Right lobe of liver (tissue), 6 donors: ENCODE measurements at regions of chr15 and their contacts with region 1.

Region 1: GRCh38 chr15:66774001-66774814 is 72.2 kb downstream of the SMAD6 start:
- DNase-seq: peak; percentile 84 to 85 (median 85)
- ATAC-seq: peak; percentile 90 to 92 (median 90)
- H3K4me3 ChIP-seq: no peak overlapping the region
- H3K27ac ChIP-seq: peak overlapping the region in 1 of 3 donors; percentile 42
- H3K4me1 ChIP-seq: peaks cover 0 to 41% (median 19%) of the 10 kb centered on the region in 4 donors
- H3K27me3 ChIP-seq: no peaks in the 10 kb centered on the region
- CTCF ChIP-seq: peak; percentile 95 to 99 (median 98)
- POLR2A ChIP-seq: no peak

Region 2: GRCh38 chr15:66497502-66498455 is 276.4 kb before region 1 on chr15 and contains the start of gene SNAPC5:
- intact Hi-C with region 1: no loop called
- DNase-seq: peak; percentile 96 to 97 (median 97)
- ATAC-seq: peak; percentile 95 to 97 (median 96)
- H3K4me3 ChIP-seq: peak within 1 kb of the TSS; percentile 83 to 93 (median 90)
- H3K27ac ChIP-seq: peak within 1 kb of the TSS; percentile 65 to 85 (median 75)
- H3K4me1 ChIP-seq: peaks cover 0 to 39% (median 12%) of the 10 kb centered on the region in 4 donors
- H3K27me3 ChIP-seq: no peaks in the 10 kb centered on the region
- CTCF ChIP-seq: peak; percentile 98 to 99 (median 98)
- POLR2A ChIP-seq: peak; percentile 80
- total RNA-seq, gene SNAPC5: 11.8 to 23.1 (median 16.2) TPM

Region 3: DNA sequence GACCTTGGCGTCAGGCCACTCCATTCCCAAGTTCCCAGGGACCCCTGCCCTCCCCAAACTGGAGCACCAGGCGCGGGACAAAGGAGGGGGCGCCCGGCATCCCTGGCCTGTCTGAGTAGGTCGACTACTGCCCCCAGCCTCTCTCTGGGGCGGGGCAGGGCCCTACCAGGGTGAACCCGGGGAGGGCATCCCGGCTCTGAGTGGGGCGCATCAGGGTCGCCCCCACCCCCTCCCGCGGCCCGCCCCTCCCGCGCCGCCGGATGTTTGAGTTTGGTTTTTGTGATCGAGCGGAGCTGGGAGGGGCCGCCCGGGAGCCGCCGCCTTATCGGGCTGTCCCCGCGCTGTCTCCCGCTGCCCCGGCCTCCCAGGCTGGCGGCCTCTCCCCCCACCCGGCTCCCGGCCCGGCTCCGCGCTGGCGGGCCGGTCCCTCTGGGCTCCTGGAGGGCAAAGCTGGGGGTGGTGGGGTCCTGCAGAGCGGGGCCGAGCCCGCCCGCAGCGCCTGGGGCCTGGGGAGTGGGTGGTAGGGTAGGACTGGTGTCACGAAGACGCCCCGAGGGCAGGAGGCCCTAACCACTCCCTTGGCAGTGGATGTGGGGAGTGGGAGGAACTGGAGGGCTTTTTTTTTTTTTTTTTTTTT is 119.4 kb before region 1 on chr15:
- intact Hi-C with region 1: no loop called
- DNase-seq: peak in 1 of 3 donors; percentile 58
- ATAC-seq: peak; percentile 10 to 40 (median 22)
- H3K4me3 ChIP-seq: peak overlapping the region in 1 of 3 donors; percentile 19
- H3K27ac ChIP-seq: peak overlapping the region; percentile 33 to 73 (median 60)
- H3K4me1 ChIP-seq: peaks cover 0 to 46% (median 17%) of the 10 kb centered on the region in 4 donors
- H3K27me3 ChIP-seq: no peaks in the 10 kb centered on the region
- CTCF ChIP-seq: no peak
- POLR2A ChIP-seq: no peak

Region 4: DNA sequence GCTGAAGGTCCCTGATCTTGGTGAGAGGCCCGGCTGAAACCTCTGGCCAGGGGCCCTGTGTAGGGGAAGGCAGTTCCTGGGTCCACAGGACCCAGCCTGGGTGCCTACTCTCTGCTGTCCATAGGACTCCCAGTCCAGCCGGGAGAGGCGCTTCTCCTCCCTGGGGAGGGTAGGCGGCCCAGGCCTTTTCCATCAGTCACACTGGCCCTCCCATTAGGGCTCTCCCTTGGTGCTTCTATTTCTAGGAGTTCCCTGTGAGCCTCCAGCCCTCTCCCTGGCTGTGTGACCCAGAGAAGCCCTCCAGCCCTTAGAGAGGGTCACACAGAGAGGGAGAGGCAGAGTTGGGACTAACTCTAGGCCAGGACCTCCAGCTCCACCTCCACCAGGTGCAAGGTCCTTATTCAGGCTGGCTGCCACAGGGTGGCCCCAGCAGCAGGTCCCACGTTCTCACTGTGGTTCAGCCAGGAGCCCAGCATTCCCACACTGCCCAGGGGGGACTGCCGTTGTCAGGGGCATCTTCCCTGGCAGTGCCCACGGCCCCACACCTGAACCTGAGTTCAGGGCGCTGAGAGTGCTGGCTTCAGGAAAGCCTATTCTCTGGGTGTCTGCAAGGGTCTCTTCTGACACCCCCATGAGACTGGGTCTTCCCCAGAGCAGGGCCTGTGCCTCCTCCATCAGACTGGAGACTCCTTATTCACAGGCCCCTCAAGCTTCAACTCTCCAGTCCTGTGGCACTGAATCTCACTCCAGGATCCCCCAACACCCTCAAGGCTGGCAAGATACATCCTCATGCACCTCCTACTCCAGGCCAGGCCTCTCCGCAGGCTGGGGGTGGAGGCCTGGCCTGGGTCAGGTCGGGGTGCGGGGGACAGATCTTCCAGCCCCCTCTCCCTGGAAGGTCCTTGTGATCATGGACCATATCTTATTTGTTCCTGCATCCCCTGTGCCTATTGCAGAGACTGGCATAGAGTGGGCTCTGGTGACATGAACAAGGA is 74.8 kb after region 1 on chr15:
- intact Hi-C with region 1: loop called in 1 of 2 experiments (anchors 5 kb)
- DNase-seq: peak in 1 of 3 donors; percentile 42
- ATAC-seq: no peak
- H3K4me3 ChIP-seq: no peak overlapping the region
- H3K27ac ChIP-seq: no peak overlapping the region
- H3K4me1 ChIP-seq: peaks cover 0 to 6% (median 0%) of the 10 kb centered on the region in 4 donors
- H3K27me3 ChIP-seq: no peaks in the 10 kb centered on the region
- CTCF ChIP-seq: no peak
- POLR2A ChIP-seq: no peak